Activated CD4-positive, alpha-beta T cell treated with anti-CD3 and anti-CD28 coated beads, Interleukin-2, amount 10 ng/mL, durations not matched to agents 24 days and 14 days (primary cell): ENCODE measurements at regions of chr6 and their contacts with region 1.

Region 1: DNA sequence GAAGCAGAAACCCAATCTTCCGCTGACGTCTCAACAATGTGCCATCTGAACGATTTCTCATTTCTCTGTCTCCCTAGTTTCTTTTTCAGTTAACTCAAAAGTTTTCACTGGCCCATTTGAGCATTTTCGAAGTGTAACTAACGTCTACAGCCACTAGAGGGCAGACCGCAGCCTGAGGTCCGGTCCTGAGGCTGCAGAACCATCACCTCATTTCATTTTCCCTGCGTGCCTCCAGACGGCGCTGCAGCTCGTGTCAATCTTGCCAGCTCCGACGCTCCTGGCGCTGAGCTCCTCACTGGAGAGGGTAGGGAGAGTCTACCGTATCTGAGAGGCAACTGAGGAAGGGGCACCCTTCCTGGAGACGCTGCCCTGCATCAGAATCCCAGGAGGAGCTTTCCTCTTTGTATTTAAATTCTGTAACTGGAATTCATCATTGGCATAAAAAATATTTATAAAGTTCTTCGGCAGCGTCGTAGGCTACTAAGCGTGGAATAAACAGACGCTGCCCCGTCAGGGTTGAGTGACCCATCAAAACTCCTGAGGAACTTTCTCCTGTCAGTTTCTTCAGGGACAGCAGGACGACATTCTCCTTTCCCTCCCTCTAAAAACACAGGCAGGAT is 28.5 kb upstream of the DTNBP1 start:
- DNase-seq: peak; percentile 94
- H3K4me3 Mint-ChIP-seq: peak overlapping the region; percentile 19
- H3K27ac Mint-ChIP-seq: no peak overlapping the region
- H3K4me1 Mint-ChIP-seq: peaks cover 12% of the 10 kb centered on the region
- H3K27me3 Mint-ChIP-seq: peaks cover 3% of the 10 kb centered on the region

Region 2: DNA sequence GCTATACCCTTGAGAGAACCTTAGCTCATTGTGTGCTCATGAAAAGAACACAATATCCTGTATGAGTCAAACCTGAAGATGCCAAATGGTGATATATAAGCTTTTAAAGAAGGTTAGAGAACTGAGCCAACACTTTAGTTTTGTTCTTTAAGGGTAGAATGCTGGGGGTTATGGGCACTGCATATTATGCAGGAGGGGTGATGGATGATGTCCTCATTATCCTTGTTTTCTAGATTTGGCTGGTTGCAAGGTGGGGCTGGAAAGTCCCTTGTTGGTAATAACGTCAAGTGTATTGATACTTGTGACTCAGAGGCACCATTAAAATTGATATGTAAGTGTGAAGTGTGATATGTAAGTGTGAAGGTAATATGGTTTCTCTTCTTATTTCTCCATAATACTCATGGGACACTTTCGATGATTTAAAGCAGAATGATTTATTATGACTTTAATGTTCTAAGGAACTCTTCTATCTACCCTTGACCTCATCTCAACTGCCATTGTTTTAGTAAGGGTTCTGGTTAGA is 85.2 kb after region 1 on chr6:
- intact Hi-C with region 1: loop called (anchors 2 kb)
- DNase-seq: peak; percentile 67
- H3K4me3 Mint-ChIP-seq: peak overlapping the region; percentile 27
- H3K27ac Mint-ChIP-seq: peak overlapping the region; percentile 88
- H3K4me1 Mint-ChIP-seq: peaks cover 43% of the 10 kb centered on the region
- H3K27me3 Mint-ChIP-seq: no peaks in the 10 kb centered on the region

Region 3: DNA sequence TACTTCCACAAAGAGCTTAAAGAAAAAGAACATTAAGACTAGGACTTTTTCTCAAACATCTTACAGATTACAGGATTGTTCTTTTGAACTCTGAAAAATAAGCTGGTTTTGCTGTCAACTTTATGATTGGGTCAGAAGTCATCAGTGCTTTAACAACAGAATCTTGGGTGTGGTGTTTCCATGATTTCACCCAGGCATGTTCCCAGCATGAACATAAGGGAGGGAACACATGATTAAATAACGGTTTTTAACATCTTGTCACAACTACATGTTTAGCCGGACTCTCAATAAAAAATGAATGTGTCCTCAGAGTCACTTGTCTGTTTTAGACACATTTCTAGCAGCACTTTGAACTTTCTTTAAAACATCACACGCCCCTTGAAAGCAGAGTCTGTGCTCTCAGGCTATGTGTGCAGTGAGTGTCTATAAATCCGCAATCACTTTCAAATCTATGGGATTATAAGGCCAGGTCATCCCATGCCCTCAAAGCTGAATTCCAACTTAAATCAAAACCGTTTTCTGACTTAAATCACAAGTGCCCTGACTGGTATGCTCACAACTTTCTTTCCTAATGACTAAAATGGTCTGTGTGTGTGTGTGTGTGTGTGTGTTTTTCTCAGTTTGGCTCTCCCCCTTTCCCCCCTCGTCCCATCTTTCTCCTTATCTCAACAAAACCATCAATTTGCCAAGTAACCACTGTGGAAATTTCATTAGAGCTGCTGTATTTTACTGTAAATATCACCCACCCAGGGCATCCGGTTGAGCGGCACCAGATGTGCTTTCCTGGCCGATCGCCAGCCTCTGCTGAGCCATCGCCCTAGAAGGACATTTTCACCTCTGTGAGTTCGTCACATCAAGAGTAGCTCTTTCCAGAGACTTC is 188.3 kb after region 1 on chr6:
- intact Hi-C with region 1: loop called (anchors 1 kb)
- DNase-seq: peak; percentile 73
- H3K4me3 Mint-ChIP-seq: peak overlapping the region; percentile 4
- H3K27ac Mint-ChIP-seq: peak overlapping the region; percentile 89
- H3K4me1 Mint-ChIP-seq: peaks cover 29% of the 10 kb centered on the region
- H3K27me3 Mint-ChIP-seq: no peaks in the 10 kb centered on the region

Region 4: DNA sequence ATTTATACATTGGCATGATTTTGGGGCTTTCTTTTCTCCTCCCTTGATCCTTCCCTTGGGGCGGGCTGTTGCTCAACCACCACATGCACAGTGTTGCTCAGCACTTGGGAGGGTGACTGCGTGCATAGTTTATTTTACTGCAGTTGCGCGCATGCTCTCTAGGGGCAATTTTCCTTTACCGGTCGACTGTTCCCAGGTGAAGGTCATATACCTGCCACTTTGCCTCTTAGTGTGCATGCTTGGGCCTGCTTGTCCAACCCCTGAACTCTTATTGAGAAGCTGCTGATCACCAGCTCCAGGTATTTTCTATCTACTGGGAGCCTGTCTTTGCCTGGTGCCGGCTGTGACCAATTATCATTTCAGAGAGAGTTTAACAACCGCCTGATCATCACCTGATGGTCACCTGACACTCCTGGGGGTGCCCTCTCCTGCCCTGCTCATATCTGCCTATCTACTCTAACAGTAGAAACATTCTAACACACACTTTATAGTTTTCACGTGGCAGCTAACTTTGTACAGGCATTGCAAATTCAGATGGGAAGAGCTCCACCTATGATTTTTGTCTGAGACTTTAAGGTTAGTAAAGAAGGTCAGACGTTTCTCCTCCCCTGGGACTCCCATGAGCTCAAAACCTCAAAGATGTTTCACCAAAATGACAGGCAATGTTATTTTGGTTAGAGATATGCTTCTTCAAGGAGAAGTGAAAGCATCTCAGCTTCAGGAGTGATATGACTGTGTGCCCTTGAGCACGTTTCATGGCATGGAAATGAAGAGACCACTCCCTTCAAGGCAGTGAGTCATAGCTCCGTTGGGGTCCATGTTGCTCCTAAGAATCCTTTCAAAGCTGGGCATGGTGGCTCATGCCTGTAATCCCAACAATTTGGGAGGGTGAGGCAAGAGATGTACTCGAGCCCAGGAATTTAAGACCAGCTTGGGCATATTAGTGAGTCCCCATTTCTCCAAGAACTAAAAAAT is 210.1 kb after region 1 on chr6:
- intact Hi-C with region 1: loop called (anchors 5 kb)
- DNase-seq: peak; percentile 82
- H3K4me3 Mint-ChIP-seq: peak overlapping the region; percentile 70
- H3K27ac Mint-ChIP-seq: peak overlapping the region; percentile 94
- H3K4me1 Mint-ChIP-seq: peaks cover 29% of the 10 kb centered on the region
- H3K27me3 Mint-ChIP-seq: no peaks in the 10 kb centered on the region

Region 5: DNA sequence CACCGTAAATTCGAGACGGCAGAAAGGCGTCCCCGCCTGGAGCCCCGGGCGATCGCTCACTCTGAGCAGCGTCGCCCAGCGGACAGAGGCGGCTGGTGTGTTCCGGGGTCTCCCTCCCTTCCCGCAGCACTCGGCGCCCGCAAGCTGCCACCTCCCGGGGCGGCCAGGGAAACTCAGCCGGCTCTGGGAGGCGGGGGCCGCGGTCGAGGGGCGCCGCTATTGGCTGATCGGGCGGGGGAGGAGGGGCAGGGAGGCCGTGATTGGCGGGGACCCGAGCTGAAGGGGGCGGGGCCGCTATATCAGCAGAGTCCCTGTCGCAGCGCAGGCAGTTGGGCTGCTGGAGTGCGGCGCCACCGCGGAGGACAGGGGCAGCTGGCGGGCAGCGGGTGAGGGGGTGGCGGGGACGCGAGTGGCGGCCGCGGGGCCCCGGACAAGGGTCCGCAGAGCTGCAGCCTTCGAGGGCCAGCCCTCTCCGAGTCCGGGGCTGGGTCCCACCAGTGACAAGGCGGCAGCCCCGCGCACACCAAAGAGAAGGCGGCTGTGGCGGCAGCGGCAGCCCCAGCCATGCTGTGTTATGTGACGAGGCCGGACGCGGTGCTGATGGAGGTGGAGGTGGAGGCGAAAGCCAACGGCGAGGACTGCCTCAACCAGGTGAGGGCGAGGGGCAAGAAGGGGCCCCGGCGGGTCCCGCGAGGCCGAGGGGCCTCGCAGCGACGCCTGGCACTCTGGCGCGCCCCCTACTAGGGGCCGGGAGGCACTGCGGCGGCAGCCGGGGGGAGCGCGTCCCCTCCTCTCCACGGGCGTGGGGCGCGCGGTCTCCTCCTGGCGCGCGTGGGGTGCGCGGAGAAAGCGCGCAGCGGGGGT is 437.6 kb after region 1 on chr6 and contains the start of gene MYLIP:
- intact Hi-C with region 1: loop called (anchors 1 kb)
- DNase-seq: peak; percentile 98
- H3K4me3 Mint-ChIP-seq: peak within 1 kb of the TSS; percentile 91
- H3K27ac Mint-ChIP-seq: peak within 1 kb of the TSS; percentile 93
- H3K4me1 Mint-ChIP-seq: peaks cover 32% of the 10 kb centered on the region
- H3K27me3 Mint-ChIP-seq: peaks cover 20% of the 10 kb centered on the region
- total RNA-seq, gene MYLIP: 18.3 and 18.5 TPM in 2 replicates

Region 6: GRCh38 chr6:16183187-16183664 is 491.9 kb after region 1 on chr6:
- intact Hi-C with region 1: loop called (anchors 1 kb)
- DNase-seq: peak; percentile 60
- H3K4me3 Mint-ChIP-seq: no peak overlapping the region
- H3K27ac Mint-ChIP-seq: no peak overlapping the region
- H3K4me1 Mint-ChIP-seq: peaks cover 21% of the 10 kb centered on the region
- H3K27me3 Mint-ChIP-seq: peaks cover 12% of the 10 kb centered on the region

Region 7: DNA sequence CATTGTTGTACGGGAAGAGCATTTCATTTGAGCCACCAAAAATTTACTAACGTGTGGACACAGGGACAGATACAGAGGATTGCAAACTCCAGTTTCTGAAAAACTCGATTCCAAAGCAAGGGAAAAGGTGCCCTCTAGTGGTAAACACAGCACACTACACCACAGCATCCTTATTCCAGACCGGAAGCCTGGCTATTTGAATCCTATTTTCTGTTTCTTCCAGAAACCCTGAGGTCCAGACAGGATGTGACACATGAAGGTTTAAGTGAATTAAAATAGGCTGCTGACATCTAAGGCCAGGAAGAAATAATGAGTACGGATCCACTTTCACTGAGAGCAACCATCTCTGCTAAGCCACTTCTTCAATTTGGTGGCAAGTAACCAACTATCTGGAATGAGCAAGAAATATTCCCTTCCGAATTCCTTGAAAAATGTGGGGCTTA is 515.3 kb after region 1 on chr6:
- intact Hi-C with region 1: loop called (anchors 1 kb)
- DNase-seq: peak; percentile 85
- H3K4me3 Mint-ChIP-seq: no peak overlapping the region
- H3K27ac Mint-ChIP-seq: peak overlapping the region; percentile 3
- H3K4me1 Mint-ChIP-seq: peaks cover 3% of the 10 kb centered on the region
- H3K27me3 Mint-ChIP-seq: peaks cover 35% of the 10 kb centered on the region